CD14-positive monocyte (primary cell): ENCODE measurements at regions of chr2 and their contacts with region 1.

Region 1: GRCh38 chr2:126527836-126528507 is 128.0 kb upstream of the GYPC start:
- DNase-seq: peak; percentile 34 to 52 (median 37)
- H3K4me3 ChIP-seq: no peak overlapping the region
- H3K4me3 Mint-ChIP-seq: no peak overlapping the region
- H3K27ac ChIP-seq: no peak overlapping the region
- H3K27ac Mint-ChIP-seq: no peak overlapping the region
- H3K4me1 ChIP-seq: no peaks in the 10 kb centered on the region
- H3K4me1 Mint-ChIP-seq: no peaks in the 10 kb centered on the region
- H3K27me3 ChIP-seq: no peaks in the 10 kb centered on the region
- H3K27me3 Mint-ChIP-seq: no peaks in the 10 kb centered on the region
- CTCF ChIP-seq: peak; percentile 71

Region 2: GRCh38 chr2:126115975-126116374 is 412.0 kb before region 1 on chr2:
- intact Hi-C with region 1: no loop called
- DNase-seq: no peak
- H3K4me3 ChIP-seq: no peak overlapping the region
- H3K4me3 Mint-ChIP-seq: no peak overlapping the region
- H3K27ac ChIP-seq: no peak overlapping the region
- H3K27ac Mint-ChIP-seq: no peak overlapping the region
- H3K4me1 ChIP-seq: no peaks in the 10 kb centered on the region
- H3K4me1 Mint-ChIP-seq: no peaks in the 10 kb centered on the region
- H3K27me3 ChIP-seq: no peaks in the 10 kb centered on the region
- H3K27me3 Mint-ChIP-seq: peaks cover 0 to 1% (median 0%) of the 10 kb centered on the region in 3 donors
- CTCF ChIP-seq: no peak

Region 3: GRCh38 chr2:126776692-126777619 is 249.0 kb after region 1 on chr2:
- intact Hi-C with region 1: loop called (anchors 5 kb)
- DNase-seq: peak; percentile 64 to 72 (median 70)
- H3K4me3 ChIP-seq: peak overlapping the region; percentile 73 to 83 (median 78)
- H3K4me3 Mint-ChIP-seq: peak overlapping the region; percentile 97 to 99
- H3K27ac ChIP-seq: peak overlapping the region; percentile 47 to 70
- H3K27ac Mint-ChIP-seq: peak overlapping the region in 6 of 7 donors; percentile 23 to 93 (median 60)
- H3K4me1 ChIP-seq: peaks cover 9 to 15% of the 10 kb centered on the region in 2 donors
- H3K4me1 Mint-ChIP-seq: peaks cover 20% of the 10 kb centered on the region
- H3K27me3 ChIP-seq: no peaks in the 10 kb centered on the region
- H3K27me3 Mint-ChIP-seq: peaks cover 0 to 14% (median 2%) of the 10 kb centered on the region in 3 donors
- CTCF ChIP-seq: peak; percentile 93